Heart left ventricle (tissue), 16 donors: ENCODE measurements at regions of chr4 and their contacts with region 1.

Region 1: GRCh38 chr4:57265831-57266582 is 155.8 kb upstream of the IGFBP7 start:
- DNase-seq: peak in 2 of 5 donors; percentile 41 to 48
- ATAC-seq: peak; percentile 66 to 81 (median 72)
- H3K4me3 ChIP-seq: no peak overlapping the region
- H3K27ac ChIP-seq: no peak overlapping the region
- H3K4me1 ChIP-seq: peaks cover 0 to 19% (median 6%) of the 10 kb centered on the region in 12 donors
- H3K27me3 ChIP-seq: no peaks in the 10 kb centered on the region
- CTCF ChIP-seq: peak in 3 of 12 donors; percentile 10 to 21 (median 15)
- POLR2A ChIP-seq: no peak

Region 2: GRCh38 chr4:57168982-57169381 is 97.0 kb before region 1 on chr4:
- intact Hi-C with region 1: loop called in 3 of 10 experiments (anchors 2 to 10 kb)
- DNase-seq: no peak
- ATAC-seq: no peak
- H3K4me3 ChIP-seq: no peak overlapping the region
- H3K27ac ChIP-seq: no peak overlapping the region
- H3K4me1 ChIP-seq: peaks cover 0 to 6% (median 1%) of the 10 kb centered on the region in 12 donors
- H3K27me3 ChIP-seq: peaks cover 0 to 6% (median 0%) of the 10 kb centered on the region in 9 donors
- CTCF ChIP-seq: no peak
- POLR2A ChIP-seq: no peak

Region 3: GRCh38 chr4:57329279-57329678 is 63.3 kb after region 1 on chr4:
- intact Hi-C with region 1: loop called in 1 of 10 experiments (anchors 1 kb)
- DNase-seq: peak in 4 of 5 donors; percentile 10 to 39 (median 20)
- ATAC-seq: peak; percentile 90 to 96 (median 94)
- H3K4me3 ChIP-seq: no peak overlapping the region
- H3K27ac ChIP-seq: peak overlapping the region in 5 of 12 donors; percentile 22 to 43 (median 28)
- H3K4me1 ChIP-seq: peaks cover 0 to 15% (median 0%) of the 10 kb centered on the region in 12 donors
- H3K27me3 ChIP-seq: no peaks in the 10 kb centered on the region
- CTCF ChIP-seq: no peak
- POLR2A ChIP-seq: no peak